Pancreas (tissue), 10 donors: ENCODE measurements at regions of chr10 and their contacts with region 1.

Region 1: DNA sequence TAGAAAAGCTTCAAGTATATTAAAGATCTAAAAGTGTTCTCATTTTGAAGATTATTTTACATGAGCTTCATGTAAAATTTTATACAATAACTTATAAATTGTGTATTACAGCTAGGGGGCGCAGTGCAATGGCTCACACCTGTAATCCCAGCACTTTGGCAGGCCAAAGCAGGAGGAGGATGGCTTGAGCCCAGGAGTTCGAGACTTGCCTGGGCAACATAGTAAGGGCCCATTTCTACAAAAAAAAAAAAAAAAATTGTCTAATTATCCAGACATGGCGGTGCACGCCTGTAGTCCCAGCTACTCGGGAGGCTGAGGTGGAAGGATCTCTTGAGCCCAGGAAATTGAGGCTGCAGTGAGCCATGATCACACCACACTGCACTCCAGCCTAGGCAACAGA is 16.6 kb downstream of the ACBD5 start:
- DNase-seq: peak in 4 of 6 donors; percentile 33 to 59 (median 52)
- ATAC-seq: peak; percentile 81 to 93 (median 87)
- H3K4me3 ChIP-seq: no peak overlapping the region
- H3K27ac ChIP-seq: no peak overlapping the region
- H3K4me1 ChIP-seq: no peaks in the 10 kb centered on the region
- H3K27me3 ChIP-seq: no peaks in the 10 kb centered on the region
- CTCF ChIP-seq: peak; percentile 23 to 50 (median 45)

Region 2: DNA sequence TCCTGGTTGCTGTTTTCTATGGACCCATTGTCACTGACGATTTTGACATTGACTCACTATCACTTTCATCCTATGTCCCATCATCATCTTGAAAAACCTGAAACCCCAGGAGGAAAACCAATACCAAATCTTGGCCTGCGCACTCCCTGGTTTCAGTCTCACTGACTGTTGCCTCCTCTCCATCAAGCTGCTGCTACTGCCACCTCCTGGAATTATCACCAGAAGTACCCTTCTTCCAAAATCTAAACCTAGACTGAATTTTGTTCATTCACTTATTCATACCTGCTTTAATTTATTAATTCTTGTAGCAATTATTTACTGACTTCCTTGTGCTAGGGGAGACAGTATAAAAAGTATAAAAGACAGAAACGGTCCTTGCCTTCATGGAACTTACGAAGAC is 61.1 kb after region 1 on chr10:
- intact Hi-C with region 1: loop called in 1 of 3 experiments (anchors 10 kb)
- DNase-seq: peak in 2 of 6 donors; percentile 10 to 15
- ATAC-seq: peak in 3 of 4 donors; percentile 53 to 67 (median 65)
- H3K4me3 ChIP-seq: no peak overlapping the region
- H3K27ac ChIP-seq: no peak overlapping the region
- H3K4me1 ChIP-seq: no peaks in the 10 kb centered on the region
- H3K27me3 ChIP-seq: no peaks in the 10 kb centered on the region
- CTCF ChIP-seq: peak in 1 of 4 donors; percentile 8

Region 3: DNA sequence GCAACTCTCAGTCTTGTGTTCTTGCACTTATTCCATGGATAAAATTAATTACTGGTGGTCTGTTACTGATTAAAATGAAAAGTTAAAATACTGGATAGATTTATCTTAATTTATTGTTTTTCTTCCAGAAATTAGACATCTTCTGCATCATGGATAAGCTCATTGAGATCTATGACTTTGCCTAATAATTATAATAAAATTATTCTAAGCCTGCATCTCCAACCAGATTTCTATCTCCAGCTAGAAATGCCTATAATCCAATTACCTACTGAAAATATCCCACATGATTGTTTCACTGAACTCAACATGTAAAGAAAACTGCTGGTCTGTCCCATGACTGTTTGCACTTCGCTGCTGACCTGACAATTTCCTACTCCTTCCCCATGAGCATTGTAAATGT is 105.0 kb after region 1 on chr10:
- intact Hi-C with region 1: no loop called
- DNase-seq: no peak
- ATAC-seq: no peak
- H3K4me3 ChIP-seq: no peak overlapping the region
- H3K27ac ChIP-seq: no peak overlapping the region
- H3K4me1 ChIP-seq: no peaks in the 10 kb centered on the region
- H3K27me3 ChIP-seq: no peaks in the 10 kb centered on the region
- CTCF ChIP-seq: no peak